GM12878 (cell line): ENCODE measurements at regions of chr20 and their contacts with region 1.

Region 1: GRCh38 chr20:16241915-16242314 is 331.3 kb downstream of the KIF16B start:
- DNase-seq: no peak
- ATAC-seq: peak; percentile 47; the same call in 2 of the 3 replicates
- H3K4me3 ChIP-seq: no peak overlapping the region
- H3K27ac ChIP-seq: no peak overlapping the region
- H3K4me1 ChIP-seq: no peaks in the 10 kb centered on the region
- H3K27me3 ChIP-seq: no peaks in the 10 kb centered on the region
- CTCF ChIP-seq: peak; percentile 14 to 54 (median 15); a peak in 2 of 6 replicates
- EP300 ChIP-seq: no peak
- POLR2A ChIP-seq: no peak
- RAD21 ChIP-seq: peak; percentile 37

Region 2: DNA sequence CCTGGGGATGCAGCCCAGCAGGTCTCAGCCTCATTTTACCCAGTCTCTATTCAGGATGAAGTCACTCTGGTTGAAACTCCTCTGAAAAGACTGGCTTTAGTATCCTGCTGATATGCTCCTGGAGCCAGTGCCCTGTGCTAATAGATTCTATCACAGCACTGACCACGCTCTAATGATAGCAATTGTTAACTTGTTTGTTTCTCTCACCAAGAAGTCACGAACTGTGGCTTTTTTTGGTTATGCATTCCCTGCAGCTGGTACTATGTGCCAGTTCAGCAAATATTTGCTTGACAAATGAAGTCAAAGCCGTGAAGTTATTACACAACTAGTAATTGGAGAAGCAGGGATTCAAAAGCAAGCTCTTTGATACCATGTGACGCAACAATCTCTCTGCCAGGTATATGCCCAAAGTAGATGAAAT is 423.3 kb before region 1 on chr20:
- CTCF ChIA-PET with region 1: no interaction called
- POLR2A ChIA-PET with region 1: no interaction called
- RAD21 ChIA-PET with region 1: no interaction called
- SMC1A ChIA-PET with region 1: no interaction called
- in situ Hi-C with region 1: no loop called
- intact Hi-C with region 1: no loop called
- DNase-seq: no peak
- ATAC-seq: no peak
- H3K4me3 ChIP-seq: no peak overlapping the region
- H3K27ac ChIP-seq: no peak overlapping the region
- H3K4me1 ChIP-seq: no peaks in the 10 kb centered on the region
- H3K27me3 ChIP-seq: no peaks in the 10 kb centered on the region
- CTCF ChIP-seq: no peak
- EP300 ChIP-seq: no peak
- POLR2A ChIP-seq: no peak
- RAD21 ChIP-seq: no peak

Region 3: DNA sequence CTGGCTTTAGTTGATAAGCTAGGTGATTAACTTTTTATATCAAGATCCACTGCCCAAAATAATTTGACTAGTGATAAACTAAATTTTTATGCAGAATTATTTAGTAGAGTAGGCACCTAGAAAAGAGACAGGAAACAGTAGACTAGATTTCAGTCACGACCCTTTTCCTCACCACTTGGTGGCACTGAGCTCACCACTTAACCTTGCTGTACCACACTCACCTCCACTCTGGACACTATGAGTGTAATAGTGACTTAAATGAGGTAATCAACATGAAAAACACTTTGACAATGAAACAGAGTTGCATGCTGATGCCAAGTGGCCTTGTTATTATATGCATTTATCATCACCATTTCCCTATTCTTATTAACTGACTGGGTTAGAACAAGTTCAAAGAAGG is 399.0 kb before region 1 on chr20:
- CTCF ChIA-PET with region 1: no interaction called
- POLR2A ChIA-PET with region 1: no interaction called
- RAD21 ChIA-PET with region 1: interaction called, 3 read pairs
- SMC1A ChIA-PET with region 1: no interaction called
- in situ Hi-C with region 1: no loop called
- intact Hi-C with region 1: loop called (anchors 2 kb)
- DNase-seq: no peak
- ATAC-seq: peak; percentile 84
- H3K4me3 ChIP-seq: no peak overlapping the region
- H3K27ac ChIP-seq: no peak overlapping the region
- H3K4me1 ChIP-seq: no peaks in the 10 kb centered on the region
- H3K27me3 ChIP-seq: no peaks in the 10 kb centered on the region
- CTCF ChIP-seq: peak; percentile 23 to 46 (median 27); a peak in 3 of 6 replicates
- EP300 ChIP-seq: no peak
- POLR2A ChIP-seq: no peak
- RAD21 ChIP-seq: peak; percentile 36

Region 4: DNA sequence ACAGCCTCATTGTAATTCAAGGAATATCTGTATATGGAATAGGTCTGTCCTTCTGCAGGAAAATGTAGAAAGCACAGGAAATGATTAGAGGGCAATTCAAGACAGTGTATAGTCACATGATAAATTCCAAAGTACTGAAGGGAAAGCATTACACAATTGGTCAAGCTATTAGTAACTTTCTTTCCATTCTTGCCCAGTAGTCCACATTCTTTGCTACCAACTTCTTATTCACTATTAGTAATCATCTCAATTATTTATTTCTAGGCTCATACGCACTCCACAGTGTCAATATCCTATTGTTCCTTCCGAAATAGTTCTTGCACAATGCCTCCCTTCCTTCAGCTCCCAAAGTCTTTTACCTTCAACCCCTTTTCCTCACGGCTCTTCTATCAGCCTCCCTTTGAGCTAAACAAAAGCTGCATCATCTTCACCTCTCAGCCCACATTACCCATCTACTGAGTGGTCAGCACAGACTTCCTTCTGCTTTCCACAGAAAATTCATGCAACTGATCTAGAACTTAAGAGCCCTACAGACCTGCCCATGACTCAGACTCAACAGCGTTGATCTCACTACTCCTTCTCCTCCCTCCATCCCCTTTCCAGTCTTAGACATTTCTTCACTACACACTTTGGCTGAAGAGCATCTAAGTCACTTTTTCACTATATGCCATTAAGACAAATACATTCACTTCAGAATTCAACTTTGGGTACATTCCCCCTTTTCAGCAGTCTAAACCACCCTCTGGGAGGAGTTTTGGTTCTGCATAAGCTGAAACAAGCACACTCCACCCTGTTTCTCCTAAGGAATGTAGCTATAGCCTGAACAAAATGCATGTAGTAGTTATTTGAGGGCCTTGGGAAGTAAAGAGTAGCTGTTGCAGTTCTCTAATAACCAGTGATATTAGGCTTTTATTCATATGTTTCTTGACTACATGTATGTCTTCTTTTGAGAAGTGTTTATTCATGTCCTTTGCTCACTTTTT is 173.4 kb after region 1 on chr20:
- CTCF ChIA-PET with region 1: no interaction called
- POLR2A ChIA-PET with region 1: no interaction called
- RAD21 ChIA-PET with region 1: no interaction called
- SMC1A ChIA-PET with region 1: no interaction called
- in situ Hi-C with region 1: no loop called
- intact Hi-C with region 1: no loop called
- DNase-seq: no peak
- ATAC-seq: no peak
- H3K4me3 ChIP-seq: no peak overlapping the region
- H3K27ac ChIP-seq: no peak overlapping the region
- H3K4me1 ChIP-seq: no peaks in the 10 kb centered on the region
- H3K27me3 ChIP-seq: no peaks in the 10 kb centered on the region
- CTCF ChIP-seq: no peak
- EP300 ChIP-seq: no peak
- POLR2A ChIP-seq: no peak
- RAD21 ChIP-seq: no peak